ENCODE measurements at regions of chr9 and their contacts with region 1.

Region 1: GRCh38 chr9:15510789-15511575 is at the start of gene PSIP1:
- DNase-seq: peak; percentile 82 to 96 (median 94)
- ATAC-seq: peak; percentile 91
- H3K4me3 ChIP-seq: peak within 1 kb of the TSS; percentile 88
- H3K4me3 Mint-ChIP-seq: peak within 1 kb of the TSS; percentile 90 to 99 (median 95)
- H3K27ac ChIP-seq: peak within 1 kb of the TSS; percentile 88
- H3K27ac Mint-ChIP-seq: peak within 1 kb of the TSS; percentile 96 to 100 (median 99)
- H3K4me1 ChIP-seq: peaks cover 19 to 39% of the 10 kb centered on the region in 2 donors
- H3K4me1 Mint-ChIP-seq: peaks cover 44 to 82% (median 66%) of the 10 kb centered on the region in 7 donors
- H3K27me3 ChIP-seq: no peaks in the 10 kb centered on the region
- H3K27me3 Mint-ChIP-seq: no peaks in the 10 kb centered on the region
- total RNA-seq, gene PSIP1: 97.8 to 213 (median 120) TPM

Region 2: GRCh38 chr9:15295761-15296405 is 215.1 kb before region 1 on chr9:
- CTCF ChIA-PET with region 1: interaction called, 3 read pairs
- POLR2A ChIA-PET with region 1: interaction called, 9 read pairs
- intact Hi-C with region 1: loop called (anchors 2 to 5 kb)
- DNase-seq: peak in 7 of 9 donors; percentile 37 to 72 (median 53)
- ATAC-seq: peak; percentile 59
- H3K4me3 ChIP-seq: peak overlapping the region; percentile 41
- H3K4me3 Mint-ChIP-seq: peak overlapping the region; percentile 70 to 98 (median 84)
- H3K27ac ChIP-seq: peak overlapping the region; percentile 88
- H3K27ac Mint-ChIP-seq: peak overlapping the region; percentile 96 to 99 (median 98)
- H3K4me1 ChIP-seq: peaks cover 71 to 82% of the 10 kb centered on the region in 2 donors
- H3K4me1 Mint-ChIP-seq: peaks cover 61 to 93% (median 88%) of the 10 kb centered on the region in 7 donors
- H3K27me3 ChIP-seq: no peaks in the 10 kb centered on the region
- H3K27me3 Mint-ChIP-seq: no peaks in the 10 kb centered on the region

Region 3: DNA sequence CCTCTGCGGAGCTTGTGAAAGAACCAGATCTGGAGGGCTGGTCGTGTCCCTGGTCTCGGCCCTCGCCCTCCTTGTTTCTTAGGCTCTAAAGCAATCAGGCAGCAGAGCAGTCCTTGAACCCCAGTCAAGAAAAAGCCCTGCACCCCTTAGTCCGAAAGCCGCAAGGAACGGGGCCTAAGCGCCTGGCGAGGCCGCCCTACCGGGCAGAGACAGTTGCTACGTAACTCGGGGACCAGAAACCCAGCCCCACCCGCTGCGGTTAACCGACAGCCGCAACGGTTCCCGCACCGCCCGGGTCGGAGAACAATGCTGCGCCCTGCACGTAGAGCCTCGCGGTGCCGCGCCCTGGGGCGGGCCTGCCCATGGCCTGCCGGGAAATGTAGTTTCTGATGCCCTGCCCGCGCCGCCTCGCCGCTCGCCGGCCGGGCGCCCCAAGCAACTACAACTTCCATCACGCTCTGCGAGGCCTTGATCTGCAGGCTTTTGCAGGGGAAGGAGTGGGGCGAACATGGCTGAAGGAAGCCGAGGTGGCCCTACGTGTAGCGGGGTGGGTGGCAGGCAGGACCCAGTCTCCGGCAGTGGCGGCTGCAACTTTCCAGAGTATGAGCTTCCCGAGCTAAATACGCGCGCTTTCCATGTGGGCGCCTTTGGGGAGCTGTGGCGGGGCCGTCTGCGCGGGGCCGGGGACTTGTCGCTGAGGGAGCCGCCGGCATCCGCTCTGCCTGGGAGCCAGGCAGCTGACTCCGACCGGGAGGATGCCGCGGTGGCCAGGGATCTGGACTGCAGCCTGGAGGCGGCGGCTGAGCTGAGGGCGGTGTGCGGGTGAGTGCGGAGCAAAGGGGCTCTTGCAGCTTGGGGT is 88.4 kb before region 1 on chr9 and contains the start of gene SNAPC3:
- CTCF ChIA-PET with region 1: no interaction called
- POLR2A ChIA-PET with region 1: interaction called, 13 read pairs
- intact Hi-C with region 1: loop called (anchors 1 kb)
- DNase-seq: peak; percentile 86 to 96 (median 93)
- ATAC-seq: peak; percentile 99
- H3K4me3 ChIP-seq: peak within 1 kb of the TSS; percentile 90
- H3K4me3 Mint-ChIP-seq: peak within 1 kb of the TSS; percentile 89 to 95 (median 92)
- H3K27ac ChIP-seq: peak within 1 kb of the TSS; percentile 74
- H3K27ac Mint-ChIP-seq: peak within 1 kb of the TSS; percentile 89 to 96 (median 93)
- H3K4me1 ChIP-seq: peaks cover 0 to 8% of the 10 kb centered on the region in 2 donors
- H3K4me1 Mint-ChIP-seq: peaks cover 20 to 47% (median 45%) of the 10 kb centered on the region in 7 donors
- H3K27me3 ChIP-seq: no peaks in the 10 kb centered on the region
- H3K27me3 Mint-ChIP-seq: no peaks in the 10 kb centered on the region
- total RNA-seq, gene SNAPC3: 11.9 to 44.4 (median 33.5) TPM

Region 4: GRCh38 chr9:15485836-15486666 is 24.9 kb before region 1 on chr9:
- CTCF ChIA-PET with region 1: no interaction called
- POLR2A ChIA-PET with region 1: interaction called, 10 read pairs
- intact Hi-C with region 1: loop called in 1 of 2 experiments (anchors 1 kb)
- DNase-seq: peak in 5 of 9 donors; percentile 27 to 41 (median 31)
- ATAC-seq: peak; percentile 45
- H3K4me3 ChIP-seq: no peak overlapping the region
- H3K4me3 Mint-ChIP-seq: no peak overlapping the region
- H3K27ac ChIP-seq: no peak overlapping the region
- H3K27ac Mint-ChIP-seq: peak overlapping the region in 8 of 9 donors; percentile 10 to 63 (median 42)
- H3K4me1 ChIP-seq: peaks cover 6 to 9% of the 10 kb centered on the region in 2 donors
- H3K4me1 Mint-ChIP-seq: peaks cover 19 to 57% (median 47%) of the 10 kb centered on the region in 7 donors
- H3K27me3 ChIP-seq: no peaks in the 10 kb centered on the region
- H3K27me3 Mint-ChIP-seq: no peaks in the 10 kb centered on the region

Region 5: GRCh38 chr9:15543047-15543813 is 32.2 kb after region 1 on chr9:
- CTCF ChIA-PET with region 1: no interaction called
- POLR2A ChIA-PET with region 1: interaction called, 84 read pairs
- intact Hi-C with region 1: no loop called
- DNase-seq: no peak
- ATAC-seq: peak; percentile 45
- H3K4me3 ChIP-seq: no peak overlapping the region
- H3K4me3 Mint-ChIP-seq: no peak overlapping the region
- H3K27ac ChIP-seq: no peak overlapping the region
- H3K27ac Mint-ChIP-seq: no peak overlapping the region
- H3K4me1 ChIP-seq: no peaks in the 10 kb centered on the region
- H3K4me1 Mint-ChIP-seq: no peaks in the 10 kb centered on the region
- H3K27me3 ChIP-seq: no peaks in the 10 kb centered on the region
- H3K27me3 Mint-ChIP-seq: peaks cover 4 to 21% (median 9%) of the 10 kb centered on the region in 5 donors

Region 6: DNA sequence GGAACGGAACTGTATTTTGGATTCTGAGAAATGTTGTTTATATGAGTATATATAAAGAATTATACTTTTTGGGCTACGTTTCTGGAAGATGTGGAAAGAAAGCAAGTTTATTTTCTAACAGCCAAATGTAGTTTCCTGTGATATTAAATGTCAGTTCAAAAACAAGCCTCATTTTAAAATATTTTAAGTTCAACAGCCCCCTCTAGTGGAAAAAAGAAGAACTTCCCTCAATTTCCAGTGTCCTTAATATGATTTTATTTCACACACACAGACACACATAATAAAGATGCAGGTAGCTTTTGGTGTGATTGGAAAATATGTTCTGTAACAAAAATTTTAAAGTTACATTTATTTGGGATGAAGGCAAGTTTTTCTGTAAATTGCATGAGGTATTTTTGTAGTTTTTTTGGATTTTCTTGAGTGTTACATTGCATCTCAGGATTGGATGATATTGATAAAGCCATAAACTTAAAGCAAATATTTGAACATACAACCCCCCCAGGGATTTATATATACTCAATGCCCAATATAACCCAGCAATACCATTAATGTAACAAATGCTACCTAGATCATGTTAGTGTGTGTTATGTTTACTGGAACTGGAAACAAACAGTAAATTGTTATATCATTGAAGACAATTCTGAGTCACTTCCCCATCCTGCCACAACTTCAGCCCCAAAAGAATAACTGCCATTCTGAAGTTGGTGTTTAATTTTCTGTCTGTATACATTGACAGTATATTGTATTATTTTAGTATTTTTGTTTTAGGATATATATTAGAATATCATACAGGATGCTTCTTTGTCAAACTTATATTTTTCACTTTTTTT is 95.9 kb after region 1 on chr9:
- CTCF ChIA-PET with region 1: interaction called, 3 read pairs
- POLR2A ChIA-PET with region 1: interaction called, 4 read pairs
- intact Hi-C with region 1: loop called in 1 of 2 experiments (anchors 1 kb)
- DNase-seq: peak in 7 of 9 donors; percentile 29 to 71 (median 60)
- ATAC-seq: peak; percentile 55
- H3K4me3 ChIP-seq: no peak overlapping the region
- H3K4me3 Mint-ChIP-seq: no peak overlapping the region
- H3K27ac ChIP-seq: no peak overlapping the region
- H3K27ac Mint-ChIP-seq: no peak overlapping the region
- H3K4me1 ChIP-seq: no peaks in the 10 kb centered on the region
- H3K4me1 Mint-ChIP-seq: peaks cover 0 to 7% (median 0%) of the 10 kb centered on the region in 7 donors
- H3K27me3 ChIP-seq: no peaks in the 10 kb centered on the region
- H3K27me3 Mint-ChIP-seq: no peaks in the 10 kb centered on the region